Transverse colon (tissue), 4 donors: ENCODE measurements at regions of chr3 and their contacts with region 1.

Region 1: DNA sequence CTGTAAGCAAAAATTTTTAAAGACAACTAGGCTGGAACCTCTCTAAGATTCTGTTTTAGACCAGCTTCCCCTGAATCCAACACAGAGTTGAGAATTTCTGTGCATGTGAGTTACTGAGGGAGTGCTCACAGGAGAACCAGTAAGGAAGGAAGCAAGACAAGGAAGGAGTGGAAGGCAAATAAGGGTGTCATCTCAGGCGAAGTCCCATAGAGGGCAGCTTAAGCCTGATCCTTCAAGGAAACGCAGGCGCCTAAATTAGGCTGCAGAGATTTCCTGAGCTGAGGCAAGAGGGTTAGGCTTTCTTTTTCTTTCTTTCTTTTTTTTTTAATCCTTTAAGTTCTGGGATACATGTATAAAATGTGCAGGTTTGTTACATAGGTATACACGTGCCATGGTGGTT is 36.2 kb upstream of the COL6A6 start:
- DNase-seq: no peak
- H3K4me3 ChIP-seq: no peak overlapping the region
- H3K27ac ChIP-seq: no peak overlapping the region
- H3K4me1 ChIP-seq: no peaks in the 10 kb centered on the region
- H3K27me3 ChIP-seq: no peaks in the 10 kb centered on the region
- CTCF ChIP-seq: peak in 1 of 5 experiments; percentile 13
- EP300 ChIP-seq: no peak
- POLR2A ChIP-seq: no peak

Region 2: GRCh38 chr3:130048726-130049125 is 432.0 kb before region 1 on chr3:
- in situ Hi-C with region 1: no loop called
- intact Hi-C with region 1: no loop called
- DNase-seq: no peak
- H3K4me3 ChIP-seq: no peak overlapping the region
- H3K27ac ChIP-seq: no peak overlapping the region
- H3K4me1 ChIP-seq: no peaks in the 10 kb centered on the region
- H3K27me3 ChIP-seq: no peaks in the 10 kb centered on the region
- CTCF ChIP-seq: no peak
- EP300 ChIP-seq: no peak
- POLR2A ChIP-seq: no peak

Region 3: DNA sequence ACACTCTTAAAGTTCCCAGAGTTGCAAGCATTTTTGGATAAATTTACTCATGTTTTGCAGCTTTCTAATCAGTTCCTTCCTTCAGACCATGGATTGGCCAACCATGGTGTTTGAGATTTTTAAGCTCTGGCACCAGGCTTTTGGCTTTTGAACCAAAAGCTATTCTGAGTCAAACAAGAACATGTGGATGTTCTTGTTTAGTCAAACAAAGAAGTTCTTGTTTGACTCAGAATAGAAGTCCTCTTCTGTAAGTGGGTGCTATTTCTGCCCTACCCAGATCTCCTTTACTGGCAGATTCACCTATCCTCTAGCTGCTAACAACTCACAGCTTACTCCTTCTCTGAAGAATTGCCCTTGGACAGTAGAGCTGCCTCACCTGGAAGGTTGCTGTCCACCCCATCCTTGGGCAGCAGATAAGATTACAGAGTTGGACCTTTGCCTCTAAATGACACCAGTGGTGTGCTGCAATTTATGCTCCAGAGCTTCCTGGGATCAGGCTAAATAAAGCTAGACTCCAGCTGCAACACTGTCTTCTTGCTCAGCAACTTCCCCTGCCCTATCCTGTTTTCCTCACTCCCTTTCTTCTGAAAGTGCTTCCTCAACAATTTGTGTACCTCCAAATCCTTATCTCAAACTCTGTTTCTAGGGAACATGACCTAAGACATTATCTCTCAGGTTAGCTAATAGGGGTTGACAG is 101.9 kb after region 1 on chr3:
- in situ Hi-C with region 1: loop called in 1 of 4 experiments (anchors 25 kb)
- intact Hi-C with region 1: no loop called
- DNase-seq: no peak
- H3K4me3 ChIP-seq: no peak overlapping the region
- H3K27ac ChIP-seq: no peak overlapping the region
- H3K4me1 ChIP-seq: no peaks in the 10 kb centered on the region
- H3K27me3 ChIP-seq: no peaks in the 10 kb centered on the region
- CTCF ChIP-seq: no peak
- EP300 ChIP-seq: no peak
- POLR2A ChIP-seq: no peak